H1 (cell line): ENCODE measurements at regions of chrX and their contacts with region 1.

Region 1: DNA sequence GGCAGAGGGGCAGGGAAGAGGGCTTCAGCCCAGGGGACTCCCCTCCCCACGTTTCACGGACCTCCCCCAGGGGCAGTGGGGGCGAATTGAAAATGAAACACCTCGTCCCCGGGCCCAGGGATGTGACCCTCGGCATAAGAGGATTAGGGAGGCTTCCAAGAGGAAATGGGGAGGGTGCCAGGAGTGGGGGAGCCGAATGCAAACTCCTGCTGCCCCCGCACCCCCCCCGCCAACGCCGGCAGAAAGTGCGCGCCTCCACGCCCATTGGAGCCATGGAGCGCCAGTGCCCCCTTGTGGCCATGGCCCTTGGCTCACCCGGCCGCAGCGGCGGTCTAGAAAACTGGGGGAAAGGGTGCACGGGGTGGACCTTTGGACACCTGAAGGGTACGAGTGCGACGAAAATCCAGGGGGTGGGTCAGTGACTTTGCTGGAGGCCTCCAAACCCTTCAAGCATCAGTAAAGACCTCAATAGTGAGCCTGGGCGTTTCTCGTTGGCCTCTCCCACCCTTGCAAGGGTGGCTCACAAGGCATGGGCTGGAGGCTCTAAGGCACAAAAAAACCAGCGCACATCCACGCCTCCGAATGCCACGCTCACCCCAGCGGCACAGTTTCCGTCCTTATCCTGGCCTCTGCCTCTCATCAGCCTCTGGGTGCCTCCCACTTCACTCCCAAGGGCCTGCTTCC is 120.8 kb upstream of the PJA1 start:
- DNase-seq: peak in 1 of 2 experiments; percentile 81
- H3K4me3 ChIP-seq: peak overlapping the region in 3 of 4 experiments; percentile 29 to 60 (median 33); a peak in 4 of 8 replicates
- H3K27ac ChIP-seq: no peak overlapping the region
- H3K4me1 ChIP-seq: peaks cover 0 to 13% (median 5%) of the 10 kb centered on the region in 4 experiments; a peak in 6 of 7 replicates
- H3K27me3 ChIP-seq: peaks cover 3 to 33% (median 27%) of the 10 kb centered on the region in 4 experiments
- CTCF ChIP-seq: peak in 2 of 3 experiments; percentile 66 to 72; a peak in 3 of 4 replicates
- EP300 ChIP-seq: no peak
- POLR2A ChIP-seq: no peak
- RAD21 ChIP-seq: peak; percentile 79 to 83

Region 2: GRCh38 chrX:68822641-68823410 is 463.2 kb before region 1 on chrX:
- CTCF ChIA-PET with region 1: interaction called, 10 read pairs
- POLR2A ChIA-PET with region 1: no interaction called
- DNase-seq: no peak
- H3K4me3 ChIP-seq: no peak overlapping the region
- H3K27ac ChIP-seq: no peak overlapping the region
- H3K4me1 ChIP-seq: peaks cover 0 to 3% (median 0%) of the 10 kb centered on the region in 4 experiments; a peak in 3 of 7 replicates
- H3K27me3 ChIP-seq: peaks cover 0 to 27% (median 20%) of the 10 kb centered on the region in 4 experiments; a peak in 6 of 7 replicates
- CTCF ChIP-seq: peak in 2 of 3 experiments; percentile 53 to 76; a peak in 3 of 4 replicates
- EP300 ChIP-seq: no peak
- POLR2A ChIP-seq: no peak
- RAD21 ChIP-seq: peak; percentile 81 to 87

Region 3: DNA sequence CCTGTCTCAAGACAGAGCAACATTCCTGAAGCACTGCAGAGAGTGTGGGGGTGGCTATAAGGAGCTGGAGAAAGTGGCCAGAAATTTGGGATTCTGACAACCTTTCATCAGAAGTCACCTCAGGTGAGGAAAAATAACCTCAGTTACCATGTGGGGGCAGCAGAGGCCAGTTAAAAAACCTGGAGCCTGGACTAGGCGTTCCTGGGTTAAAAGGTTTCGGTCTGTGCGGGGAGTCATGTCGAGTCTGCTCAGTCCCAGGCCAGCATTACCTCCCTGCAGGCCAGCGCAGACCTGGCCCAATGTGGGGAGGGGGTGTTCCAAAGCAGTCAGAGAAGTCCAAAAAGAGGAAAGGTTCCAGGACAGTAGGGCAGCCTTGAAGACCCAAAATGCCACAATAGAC is 207.2 kb after region 1 on chrX:
- CTCF ChIA-PET with region 1: no interaction called
- POLR2A ChIA-PET with region 1: no interaction called
- DNase-seq: peak in 1 of 2 experiments; percentile 72
- H3K4me3 ChIP-seq: no peak overlapping the region
- H3K27ac ChIP-seq: no peak overlapping the region
- H3K4me1 ChIP-seq: no peaks in the 10 kb centered on the region
- H3K27me3 ChIP-seq: no peaks in the 10 kb centered on the region
- CTCF ChIP-seq: peak in 2 of 3 experiments; percentile 51 to 54; a peak in 3 of 4 replicates
- EP300 ChIP-seq: no peak
- POLR2A ChIP-seq: no peak
- RAD21 ChIP-seq: peak; percentile 71 to 81